Activated CD8-positive, alpha-beta T cell treated with anti-CD3 and anti-CD28 coated beads for 36 hours (primary cell): ENCODE measurements at regions of chr19 and their contacts with region 1.

Region 1: GRCh38 chr19:3108775-3109174 is 14.6 kb downstream of the GNA11 start:
- DNase-seq: peak; percentile 85
- ATAC-seq: peak; percentile 83
- H3K4me3 Mint-ChIP-seq: no peak overlapping the region
- H3K27ac Mint-ChIP-seq: peak overlapping the region; percentile 61
- H3K4me1 Mint-ChIP-seq: peaks cover 8% of the 10 kb centered on the region
- H3K27me3 Mint-ChIP-seq: no peaks in the 10 kb centered on the region
- CTCF ChIP-seq: peak; percentile 94

Region 2: DNA sequence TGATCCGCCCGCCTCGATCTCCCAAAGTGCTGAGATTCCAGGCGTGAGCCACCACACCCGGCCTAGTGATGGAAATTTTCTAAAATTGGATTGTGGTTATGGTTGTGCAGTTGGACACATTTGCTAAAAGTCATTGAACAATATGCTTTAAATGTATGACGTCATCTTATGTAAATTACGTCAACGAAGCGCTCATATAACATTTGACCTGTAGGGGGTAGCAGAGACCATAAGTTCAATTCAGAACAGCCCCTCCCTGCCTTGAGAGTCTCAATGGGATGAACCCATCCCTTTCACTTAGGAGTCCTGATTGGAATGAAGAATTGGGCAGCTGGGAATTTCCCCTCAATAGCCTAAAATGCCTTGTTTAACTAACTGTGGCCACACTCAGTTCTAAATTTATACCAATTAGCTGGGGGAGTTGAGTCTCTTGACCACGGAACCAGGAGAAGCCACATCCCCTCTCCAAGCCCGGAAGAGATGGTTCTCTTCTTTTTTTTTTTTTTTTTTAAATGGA is 146.7 kb before region 1 on chr19:
- CTCF ChIA-PET with region 1: interaction called, 21 read pairs
- POLR2A ChIA-PET with region 1: no interaction called
- intact Hi-C with region 1: loop called (anchors 10 kb)
- DNase-seq: peak; percentile 65
- ATAC-seq: peak; percentile 84
- H3K4me3 Mint-ChIP-seq: no peak overlapping the region
- H3K27ac Mint-ChIP-seq: no peak overlapping the region
- H3K4me1 Mint-ChIP-seq: peaks cover 3% of the 10 kb centered on the region
- H3K27me3 Mint-ChIP-seq: no peaks in the 10 kb centered on the region
- CTCF ChIP-seq: peak; percentile 81

Region 3: GRCh38 chr19:3075895-3076431 is 32.8 kb before region 1 on chr19:
- CTCF ChIA-PET with region 1: interaction called, 179 read pairs
- POLR2A ChIA-PET with region 1: no interaction called
- intact Hi-C with region 1: no loop called
- DNase-seq: peak; percentile 83
- ATAC-seq: peak; percentile 94
- H3K4me3 Mint-ChIP-seq: no peak overlapping the region
- H3K27ac Mint-ChIP-seq: no peak overlapping the region
- H3K4me1 Mint-ChIP-seq: peaks cover 2% of the 10 kb centered on the region
- H3K27me3 Mint-ChIP-seq: no peaks in the 10 kb centered on the region
- CTCF ChIP-seq: peak; percentile 86

Region 4: DNA sequence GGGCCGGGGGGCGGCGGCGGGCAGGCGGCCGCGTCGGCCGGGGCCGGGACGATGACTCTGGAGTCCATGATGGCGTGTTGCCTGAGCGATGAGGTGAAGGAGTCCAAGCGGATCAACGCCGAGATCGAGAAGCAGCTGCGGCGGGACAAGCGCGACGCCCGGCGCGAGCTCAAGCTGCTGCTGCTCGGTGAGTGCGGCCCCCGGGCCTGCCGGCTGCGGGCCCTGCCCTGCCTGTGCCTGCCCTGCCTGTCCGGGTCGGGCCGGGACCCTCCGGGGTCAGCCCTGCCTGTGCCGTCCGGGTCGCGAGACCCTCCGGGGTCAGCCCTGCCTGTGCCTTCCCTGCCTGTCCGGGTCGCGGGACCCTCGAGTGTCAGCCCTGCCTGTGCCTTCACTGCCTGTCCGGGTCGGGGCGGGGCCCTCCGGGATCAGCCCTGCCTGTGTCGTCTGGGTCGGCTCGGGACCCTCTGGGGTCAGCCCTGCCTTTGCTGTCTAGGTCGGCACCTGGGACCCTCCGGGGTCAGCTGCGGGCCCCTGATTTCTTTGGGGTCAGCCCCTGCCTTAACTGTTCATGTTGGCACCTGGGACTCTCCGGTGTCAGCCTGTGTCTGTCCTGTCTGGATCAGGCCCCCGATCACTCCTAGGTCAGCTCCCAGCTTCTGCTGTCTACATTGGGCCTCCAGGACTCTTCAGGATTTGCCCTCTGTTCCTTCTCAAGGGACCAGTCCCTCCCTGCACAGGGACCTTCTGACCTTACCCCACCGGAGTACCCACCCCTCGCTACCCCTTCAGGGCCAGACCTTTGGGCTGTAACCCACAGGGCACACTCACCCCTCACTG is 14.0 kb before region 1 on chr19:
- CTCF ChIA-PET with region 1: interaction called, 16 read pairs
- POLR2A ChIA-PET with region 1: no interaction called
- intact Hi-C with region 1: no loop called
- DNase-seq: peak; percentile 63
- ATAC-seq: peak; percentile 57
- H3K4me3 Mint-ChIP-seq: peak overlapping the region; percentile 67
- H3K27ac Mint-ChIP-seq: no peak overlapping the region
- H3K4me1 Mint-ChIP-seq: peaks cover 28% of the 10 kb centered on the region
- H3K27me3 Mint-ChIP-seq: peaks cover 5% of the 10 kb centered on the region
- CTCF ChIP-seq: no peak

Region 5: GRCh38 chr19:3125900-3126524 is 17.2 kb after region 1 on chr19:
- CTCF ChIA-PET with region 1: interaction called, 36 read pairs
- POLR2A ChIA-PET with region 1: interaction called, 3 read pairs
- intact Hi-C with region 1: no loop called
- DNase-seq: peak; percentile 76
- ATAC-seq: peak; percentile 99
- H3K4me3 Mint-ChIP-seq: no peak overlapping the region
- H3K27ac Mint-ChIP-seq: no peak overlapping the region
- H3K4me1 Mint-ChIP-seq: peaks cover 7% of the 10 kb centered on the region
- H3K27me3 Mint-ChIP-seq: no peaks in the 10 kb centered on the region
- CTCF ChIP-seq: peak; percentile 83

Region 6: DNA sequence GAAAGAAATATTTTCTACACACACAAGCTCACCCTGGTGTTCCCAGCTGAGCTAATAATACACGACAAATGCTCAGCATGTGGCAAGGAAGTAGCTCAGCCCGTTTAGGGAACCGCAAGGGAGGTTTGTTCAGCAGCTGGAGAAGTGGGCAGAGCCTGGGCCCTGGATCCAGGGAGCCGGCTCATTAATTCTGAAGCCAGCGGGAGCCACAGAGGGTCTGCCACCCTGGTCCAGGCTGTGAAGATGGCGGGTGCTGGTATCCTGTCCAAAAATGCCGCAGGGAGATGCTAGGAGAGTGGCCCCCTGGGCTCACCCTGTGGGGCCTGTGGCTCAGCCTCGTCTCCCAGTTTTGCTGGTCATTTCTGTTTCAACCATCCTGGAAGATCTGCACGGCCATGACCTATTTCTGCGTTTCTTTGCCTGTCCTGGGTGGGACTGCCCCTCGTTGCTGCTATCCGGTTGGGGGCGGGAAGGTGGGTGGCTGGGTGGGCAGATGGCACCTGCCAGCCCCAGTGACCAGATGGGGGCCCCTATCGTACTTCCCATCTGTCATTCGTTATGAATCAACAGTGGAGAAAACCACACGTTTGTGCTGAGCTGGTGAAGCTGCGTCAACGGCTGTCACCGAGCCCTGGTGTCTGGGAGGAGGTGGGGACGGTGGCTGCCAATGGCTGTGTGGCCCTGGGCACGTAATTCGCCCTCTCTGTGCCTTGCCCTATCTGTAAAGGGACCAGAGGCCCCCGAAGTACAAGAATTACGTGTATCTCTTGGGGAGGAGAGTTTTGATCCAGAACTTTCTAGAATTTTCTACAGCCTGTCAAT is 24.4 kb after region 1 on chr19:
- CTCF ChIA-PET with region 1: interaction called, 36 read pairs
- POLR2A ChIA-PET with region 1: interaction called, 3 read pairs
- intact Hi-C with region 1: no loop called
- DNase-seq: peak; percentile 96
- ATAC-seq: peak; percentile 98
- H3K4me3 Mint-ChIP-seq: peak overlapping the region; percentile 45
- H3K27ac Mint-ChIP-seq: peak overlapping the region; percentile 88
- H3K4me1 Mint-ChIP-seq: peaks cover 32% of the 10 kb centered on the region
- H3K27me3 Mint-ChIP-seq: peaks cover 10% of the 10 kb centered on the region
- CTCF ChIP-seq: no peak